Mammary epithelial cell (primary cell): ENCODE measurements at regions of chr3 and their contacts with region 1.

Region 1: GRCh38 chr3:138824114-138824506 is 10.6 kb downstream of the PIK3CB start:
- DNase-seq: no peak
- H3K4me3 ChIP-seq: no peak overlapping the region
- H3K27ac ChIP-seq: no peak overlapping the region
- H3K4me1 ChIP-seq: peaks cover 8% of the 10 kb centered on the region
- H3K27me3 ChIP-seq: no peaks in the 10 kb centered on the region
- CTCF ChIP-seq: no peak

Region 2: GRCh38 chr3:138768125-138768524 is 56.0 kb before region 1 on chr3:
- CTCF ChIA-PET with region 1: no interaction called
- dilution Hi-C with region 1: loop called (anchors 5 kb)
- in situ Hi-C with region 1: no loop called
- intact Hi-C with region 1: no loop called
- DNase-seq: no peak
- H3K4me3 ChIP-seq: no peak overlapping the region
- H3K27ac ChIP-seq: no peak overlapping the region
- H3K4me1 ChIP-seq: peaks cover 16% of the 10 kb centered on the region
- H3K27me3 ChIP-seq: no peaks in the 10 kb centered on the region
- CTCF ChIP-seq: no peak

Region 3: GRCh38 chr3:138774529-138775253 is 49.4 kb before region 1 on chr3:
- CTCF ChIA-PET with region 1: no interaction called
- dilution Hi-C with region 1: loop called (anchors 5 kb)
- in situ Hi-C with region 1: no loop called
- intact Hi-C with region 1: loop called (anchors 2 kb)
- DNase-seq: peak; percentile 98
- H3K4me3 ChIP-seq: no peak overlapping the region
- H3K27ac ChIP-seq: peak overlapping the region; percentile 84
- H3K4me1 ChIP-seq: peaks cover 25% of the 10 kb centered on the region
- H3K27me3 ChIP-seq: no peaks in the 10 kb centered on the region
- CTCF ChIP-seq: no peak

Region 4: DNA sequence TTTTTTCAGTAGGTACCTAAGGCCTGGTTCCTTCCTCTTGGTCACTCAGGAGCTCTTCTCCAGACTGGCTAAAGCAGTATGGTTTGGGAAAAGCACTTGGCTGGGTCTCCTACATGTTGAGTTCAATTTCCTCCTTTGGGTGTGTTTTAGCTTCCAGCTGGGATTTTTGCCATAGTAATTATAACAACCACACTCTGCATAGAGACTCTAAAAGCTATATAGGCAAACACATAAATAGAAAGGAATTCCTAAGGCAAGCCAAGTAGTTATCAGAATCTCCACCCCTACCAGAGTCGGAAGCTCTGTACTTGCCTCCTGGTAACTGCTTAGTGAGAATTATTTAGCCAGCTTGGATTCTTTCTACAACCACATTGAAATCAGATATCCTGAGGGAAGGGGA is 74.2 kb after region 1 on chr3:
- CTCF ChIA-PET with region 1: no interaction called
- dilution Hi-C with region 1: loop called (anchors 5 kb)
- in situ Hi-C with region 1: no loop called
- intact Hi-C with region 1: no loop called
- DNase-seq: no peak
- H3K4me3 ChIP-seq: no peak overlapping the region
- H3K27ac ChIP-seq: no peak overlapping the region
- H3K4me1 ChIP-seq: no peaks in the 10 kb centered on the region
- H3K27me3 ChIP-seq: no peaks in the 10 kb centered on the region
- CTCF ChIP-seq: no peak

Region 5: GRCh38 chr3:138923531-138923994 is 99.5 kb after region 1 on chr3:
- CTCF ChIA-PET with region 1: no interaction called
- dilution Hi-C with region 1: loop called (anchors 5 kb)
- in situ Hi-C with region 1: no loop called
- intact Hi-C with region 1: no loop called
- DNase-seq: peak; percentile 78
- H3K4me3 ChIP-seq: no peak overlapping the region
- H3K27ac ChIP-seq: no peak overlapping the region
- H3K4me1 ChIP-seq: peaks cover 16% of the 10 kb centered on the region
- H3K27me3 ChIP-seq: no peaks in the 10 kb centered on the region
- CTCF ChIP-seq: peak; percentile 94 to 98

Region 6: GRCh38 chr3:139134678-139135372 is 310.7 kb after region 1 on chr3:
- CTCF ChIA-PET with region 1: no interaction called
- dilution Hi-C with region 1: no loop called
- in situ Hi-C with region 1: no loop called
- intact Hi-C with region 1: no loop called
- DNase-seq: peak; percentile 32
- H3K4me3 ChIP-seq: no peak overlapping the region
- H3K27ac ChIP-seq: no peak overlapping the region
- H3K4me1 ChIP-seq: peaks cover 9% of the 10 kb centered on the region
- H3K27me3 ChIP-seq: no peaks in the 10 kb centered on the region
- CTCF ChIP-seq: no peak